ENCODE measurements at regions of chr1 and their contacts with region 1.

Region 1: DNA sequence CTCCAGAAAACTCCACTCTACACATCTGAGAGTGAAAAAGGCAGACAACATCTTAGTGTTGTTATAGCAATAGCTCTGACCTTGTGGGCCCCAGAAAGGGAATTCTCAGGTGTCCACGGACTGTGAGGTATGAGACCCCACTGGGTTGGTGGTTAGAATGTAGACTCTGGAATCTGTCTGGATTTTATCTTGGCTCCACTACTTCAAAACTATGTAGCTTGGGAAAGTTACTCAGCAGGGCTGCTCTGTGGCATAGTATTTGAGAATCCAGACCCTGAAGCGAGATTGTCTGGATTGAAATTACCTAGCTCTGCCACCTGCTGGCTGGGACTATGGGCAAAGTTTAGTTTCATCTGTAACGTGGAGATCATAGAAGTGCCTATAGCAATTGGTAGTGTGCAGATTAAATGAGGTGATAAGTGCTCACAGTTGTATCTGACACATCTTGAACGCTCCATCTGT is 25.8 kb downstream of the PRDM2 start:
- DNase-seq: no peak
- ATAC-seq: peak in 1 of 4 donors; percentile 52
- H3K4me3 ChIP-seq: no peak overlapping the region
- H3K27ac ChIP-seq: no peak overlapping the region
- H3K4me1 ChIP-seq: peaks cover 0 to 22% (median 0%) of the 10 kb centered on the region in 12 donors
- H3K27me3 ChIP-seq: no peaks in the 10 kb centered on the region
- CTCF ChIP-seq: peak in 7 of 12 donors; percentile 13 to 41 (median 31)
- POLR2A ChIP-seq: no peak

Region 2: GRCh38 chr1:15066191-15066590 is 1340.4 kb after region 1 on chr1:
- intact Hi-C with region 1: loop called in 1 of 10 experiments (anchors 5 kb)
- DNase-seq: peak in 1 of 5 donors; percentile 22
- ATAC-seq: no peak
- H3K4me3 ChIP-seq: no peak overlapping the region
- H3K27ac ChIP-seq: no peak overlapping the region
- H3K4me1 ChIP-seq: no peaks in the 10 kb centered on the region
- H3K27me3 ChIP-seq: no peaks in the 10 kb centered on the region
- CTCF ChIP-seq: no peak
- POLR2A ChIP-seq: no peak